BJ (cell line): ENCODE measurements at regions of chr19 and their contacts with region 1.

Region 1: DNA sequence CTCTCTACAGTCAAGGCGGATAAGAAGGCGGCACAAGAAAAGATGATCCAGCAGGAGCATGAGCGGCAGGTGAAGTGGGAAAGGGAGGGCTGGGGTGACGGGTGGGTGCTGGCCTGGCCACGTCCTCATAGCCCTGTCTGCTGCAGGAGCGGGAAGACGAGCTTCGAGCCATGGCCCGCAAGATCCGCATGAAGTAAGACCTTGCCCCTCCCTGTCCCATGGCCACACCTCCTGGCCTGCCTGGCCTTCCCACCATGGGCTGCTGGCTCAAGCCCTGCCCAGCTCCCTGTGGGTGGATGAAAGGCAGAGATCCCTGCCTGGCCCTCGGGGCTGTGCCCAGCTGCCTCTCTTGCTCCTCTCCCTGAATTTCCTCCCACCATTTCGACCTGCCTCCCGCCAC is 7.2 kb downstream of the ZNF296 start:
- DNase-seq: no peak
- H3K4me3 ChIP-seq: no peak overlapping the region
- H3K27me3 ChIP-seq: no peaks in the 10 kb centered on the region
- CTCF ChIP-seq: no peak

Region 2: GRCh38 chr19:43957891-43958290 is 1111.2 kb before region 1 on chr19:
- CTCF ChIA-PET with region 1: no interaction called
- POLR2A ChIA-PET with region 1: no interaction called
- DNase-seq: peak; percentile 56
- H3K4me3 ChIP-seq: no peak overlapping the region
- H3K27me3 ChIP-seq: no peaks in the 10 kb centered on the region
- CTCF ChIP-seq: no peak

Region 3: DNA sequence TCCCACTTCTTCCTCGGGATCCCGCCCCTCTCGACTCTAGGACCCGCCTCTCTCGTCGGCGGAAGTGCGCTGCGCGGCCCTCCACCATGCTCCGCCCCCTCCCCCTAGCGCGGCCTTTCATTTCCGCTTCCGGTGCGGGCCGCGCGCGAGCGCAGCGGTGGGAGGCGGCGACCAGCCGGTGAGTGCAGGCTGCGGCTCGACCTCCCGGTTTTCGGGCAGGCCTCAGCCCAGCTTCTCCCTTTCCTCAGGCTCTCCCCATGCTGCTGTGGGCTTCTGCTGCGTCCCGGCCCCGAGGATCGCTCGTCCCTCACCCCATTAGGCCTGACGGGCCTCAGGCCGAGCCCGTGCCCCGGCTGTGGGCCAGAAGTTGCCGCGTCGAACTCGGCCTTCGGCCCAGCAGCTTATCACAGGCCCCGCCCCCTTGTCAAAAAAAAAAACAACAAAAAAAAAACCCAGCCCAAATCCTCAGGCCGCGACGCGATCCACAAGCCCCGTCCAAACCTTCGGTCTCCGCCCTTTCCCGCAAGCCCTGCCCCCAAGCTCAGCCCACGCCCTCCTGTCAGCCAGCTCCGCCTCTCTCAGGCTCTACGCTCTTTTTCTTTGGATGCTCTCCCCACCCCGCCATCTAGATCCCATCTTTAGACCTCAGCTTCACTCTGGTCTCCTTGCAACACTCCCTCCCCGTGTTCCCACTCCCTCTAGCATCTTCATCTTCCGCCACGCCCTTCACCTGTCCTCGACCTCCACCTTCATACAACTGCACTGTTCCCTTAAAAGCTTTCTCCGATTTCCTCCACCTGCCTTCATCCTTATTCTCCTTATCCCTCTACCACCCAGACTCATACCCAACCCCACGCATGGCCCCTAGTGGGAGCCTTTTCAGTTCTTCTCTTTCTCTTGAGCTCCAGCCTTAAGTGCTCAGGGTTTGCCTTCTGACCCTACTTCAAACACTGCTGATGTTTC is 29.8 kb before region 1 on chr19 and contains the start of gene CLASRP:
- CTCF ChIA-PET with region 1: no interaction called
- POLR2A ChIA-PET with region 1: interaction called, 10 read pairs
- DNase-seq: peak; percentile 31
- H3K4me3 ChIP-seq: peak within 1 kb of the TSS; percentile 87
- H3K27me3 ChIP-seq: no peaks in the 10 kb centered on the region
- CTCF ChIP-seq: no peak
- polyA plus RNA-seq, gene CLASRP: 13.6 and 15.9 TPM in 2 replicates

Region 4: GRCh38 chr19:45079063-45079910 is 10.2 kb after region 1 on chr19 and contains the start of gene GEMIN7:
- CTCF ChIA-PET with region 1: no interaction called
- POLR2A ChIA-PET with region 1: no interaction called
- DNase-seq: no peak
- H3K4me3 ChIP-seq: peak within 1 kb of the TSS; percentile 80
- H3K27me3 ChIP-seq: no peaks in the 10 kb centered on the region
- CTCF ChIP-seq: no peak
- polyA plus RNA-seq, gene GEMIN7: 17.0 and 25.0 TPM in 2 replicates

Region 5: DNA sequence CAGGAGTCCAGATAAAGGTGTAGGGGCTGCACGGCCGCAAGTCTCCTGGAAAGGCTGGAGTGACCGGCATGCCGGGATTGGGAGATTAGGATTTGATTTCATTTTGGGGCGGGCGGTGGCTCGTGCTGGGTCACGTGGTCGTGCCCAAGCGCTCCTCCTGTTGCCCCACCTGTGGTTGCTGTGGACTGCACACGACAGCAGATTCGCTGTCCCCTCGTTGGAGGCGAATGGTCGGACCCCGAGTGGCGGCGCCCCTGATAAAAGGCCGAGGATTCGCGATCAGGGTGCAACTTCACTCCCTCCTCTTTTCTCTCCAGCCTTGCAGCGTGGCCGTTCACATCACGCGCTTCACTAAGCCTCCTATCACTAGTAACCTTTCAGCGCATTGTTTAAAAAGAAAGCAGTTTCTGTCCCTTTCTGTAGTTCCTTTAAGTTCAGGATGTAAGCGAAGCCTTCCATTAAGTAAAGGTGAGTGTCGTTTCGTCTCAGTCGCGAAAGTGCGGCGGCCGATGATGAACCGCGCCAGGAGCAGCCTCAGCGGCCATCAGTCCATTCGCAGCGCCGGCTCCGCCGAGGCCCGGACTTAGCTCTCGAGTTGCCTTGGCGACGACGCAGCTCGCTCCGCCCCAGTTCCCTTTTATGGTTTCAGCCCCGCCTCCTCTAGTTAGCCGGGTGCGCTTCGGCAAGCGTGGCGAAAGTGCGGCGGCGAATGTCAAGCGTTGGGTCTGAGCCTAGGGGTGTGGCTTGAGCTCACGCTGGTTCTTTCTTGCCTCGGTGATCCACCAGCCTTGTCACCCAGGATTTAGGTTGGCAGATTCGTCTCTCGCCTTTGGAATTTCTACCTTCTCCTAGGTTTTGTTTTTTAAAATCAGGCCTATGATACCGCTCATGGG is 22.2 kb after region 1 on chr19:
- CTCF ChIA-PET with region 1: no interaction called
- POLR2A ChIA-PET with region 1: interaction called, 11 read pairs
- DNase-seq: peak; percentile 94
- H3K4me3 ChIP-seq: peak overlapping the region; percentile 64
- H3K27me3 ChIP-seq: no peaks in the 10 kb centered on the region
- CTCF ChIP-seq: no peak